Posterior vena cava (tissue), 2 donors: ENCODE measurements at regions of chr14 and their contacts with region 1.

Region 1: GRCh38 chr14:91177073-91178034 is 63.5 kb downstream of the DGLUCY start:
- DNase-seq: peak; percentile 85

Region 2: DNA sequence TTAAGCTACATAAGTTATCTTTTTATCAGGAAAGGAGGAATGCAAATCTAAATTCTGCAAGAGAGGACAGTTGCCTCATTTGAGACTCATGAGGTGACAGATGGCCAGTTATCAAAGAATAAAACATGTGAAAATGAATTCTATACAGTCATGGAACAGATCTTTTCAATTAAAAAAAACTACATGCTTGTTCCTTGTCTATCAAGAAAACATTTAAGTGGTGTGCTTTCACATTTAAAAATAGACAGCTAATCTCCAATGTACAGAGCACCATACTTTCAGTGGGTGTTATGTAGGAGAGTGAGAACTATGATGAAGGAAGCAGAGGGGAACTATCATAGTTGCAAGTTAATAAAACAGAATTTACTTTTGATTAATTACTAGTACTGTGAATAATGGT is 284.4 kb before region 1 on chr14:
- intact Hi-C with region 1: no loop called
- DNase-seq: no peak

Region 3: GRCh38 chr14:90903101-90903500 is 274.3 kb before region 1 on chr14:
- intact Hi-C with region 1: loop called (anchors 2 to 5 kb)
- DNase-seq: no peak

Region 4: DNA sequence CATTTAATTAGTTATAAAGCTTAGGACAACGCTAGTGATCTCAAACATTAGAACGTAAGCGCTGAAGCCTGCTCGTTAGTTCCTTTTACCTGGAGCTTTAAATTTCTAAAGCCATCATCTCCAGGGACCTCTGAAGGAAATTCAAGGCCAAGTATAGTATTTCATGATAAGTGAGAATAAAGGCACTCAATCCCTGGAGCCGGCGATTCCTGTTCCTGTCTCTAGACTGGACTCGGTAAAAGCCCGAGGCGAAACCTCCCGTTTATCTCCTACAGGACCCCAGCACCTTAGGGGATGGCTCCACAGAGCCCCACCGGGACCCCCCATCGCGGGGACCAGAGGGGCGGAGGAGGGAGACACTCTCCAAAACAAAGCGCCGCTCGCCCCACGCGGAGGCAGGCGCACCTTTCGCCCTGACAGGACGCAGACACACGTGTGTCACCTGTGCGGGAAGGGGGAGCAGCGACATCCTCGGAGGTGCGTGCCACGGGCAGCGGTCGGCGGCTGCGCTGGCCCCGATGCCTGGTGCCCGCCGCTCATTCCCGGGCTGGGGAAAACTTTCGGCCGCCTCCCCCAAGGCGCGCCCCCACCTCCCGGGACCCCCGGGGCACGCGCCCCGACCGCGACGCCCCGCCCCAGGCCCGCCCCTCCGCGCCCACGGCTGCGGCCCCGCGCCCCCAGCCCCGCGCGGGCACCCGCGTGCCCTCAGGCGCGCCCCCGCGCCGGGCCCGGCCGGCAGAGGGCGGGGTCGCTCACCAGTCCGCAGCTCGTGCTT is 117.6 kb before region 1 on chr14:
- intact Hi-C with region 1: loop called in 1 of 2 experiments (anchors 10 kb)
- DNase-seq: peak; percentile 81

Region 5: GRCh38 chr14:91286530-91286937 is 109.2 kb after region 1 on chr14:
- intact Hi-C with region 1: loop called (anchors 2 to 5 kb)
- DNase-seq: peak; percentile 92